GM13977 (cell line): ENCODE measurements at regions of chr17 and their contacts with region 1.

Region 1: GRCh38 chr17:13957636-13958035 is 111.7 kb upstream of the COX10 start:
- DNase-seq: no peak
- CTCF ChIP-seq: no peak

Region 2: GRCh38 chr17:13490906-13491482 is 466.6 kb before region 1 on chr17:
- in situ Hi-C with region 1: no loop called
- DNase-seq: no peak
- CTCF ChIP-seq: no peak

Region 3: DNA sequence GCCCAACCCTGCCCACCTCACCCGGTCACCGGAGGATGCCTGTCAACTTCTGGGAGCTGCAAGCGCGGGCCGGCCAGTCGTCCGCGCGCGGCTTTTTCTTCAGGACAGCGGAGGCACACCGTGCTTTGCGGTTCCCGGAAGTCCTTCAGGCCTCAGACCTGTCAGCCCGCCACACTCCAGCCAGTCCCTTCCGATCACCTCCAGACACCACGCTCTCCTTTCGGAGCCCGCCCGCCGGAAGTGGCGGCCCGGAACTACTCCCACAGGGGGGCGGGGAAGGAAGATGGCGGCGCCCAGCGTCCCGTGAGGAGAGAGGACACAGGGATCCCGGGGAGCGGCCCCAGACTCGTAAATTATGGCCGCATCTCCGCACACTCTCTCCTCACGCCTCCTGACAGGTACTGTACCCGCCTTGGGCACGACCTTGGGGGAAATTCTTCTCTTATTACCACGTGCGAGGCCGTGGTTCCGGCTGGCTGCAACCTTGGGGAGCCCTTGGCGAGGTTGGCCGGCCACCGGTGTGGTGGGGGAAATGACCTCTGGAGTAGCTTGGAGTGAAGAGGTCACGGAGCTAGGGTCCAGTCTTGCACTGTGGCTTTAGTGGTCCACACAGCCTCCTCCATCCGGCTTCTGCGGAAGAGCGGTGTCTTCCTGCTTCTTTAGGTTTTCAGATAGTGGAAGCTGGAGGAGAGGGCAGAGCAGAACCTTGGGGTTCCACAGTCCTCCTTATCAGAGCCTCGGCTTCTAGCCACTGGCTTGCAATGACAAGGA is 111.8 kb after region 1 on chr17 and contains the start of gene COX10:
- in situ Hi-C with region 1: loop called (anchors 25 kb)
- DNase-seq: peak; percentile 81
- CTCF ChIP-seq: no peak

Region 4: DNA sequence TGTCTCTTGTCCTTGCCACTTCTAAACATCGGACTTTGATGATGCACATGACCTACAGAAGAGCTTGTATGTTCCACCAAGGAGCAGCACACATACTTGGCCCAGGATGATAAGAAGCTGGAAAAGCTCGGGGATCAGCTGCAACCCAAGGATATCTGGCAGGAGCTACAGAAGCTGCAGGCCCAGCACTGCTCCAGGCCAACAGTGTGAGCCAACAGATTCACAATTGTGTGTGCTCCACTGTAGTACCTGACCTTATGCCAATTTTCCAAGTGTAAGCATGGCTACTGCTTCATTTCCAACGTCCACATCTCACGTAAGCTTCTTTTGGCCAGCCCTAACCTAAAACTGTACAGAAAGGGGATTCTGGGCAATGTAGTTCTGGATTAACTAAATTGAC is 195.1 kb after region 1 on chr17:
- in situ Hi-C with region 1: no loop called
- DNase-seq: no peak
- CTCF ChIP-seq: no peak